Heart left ventricle (tissue), 16 donors: ENCODE measurements at regions of chr10 and their contacts with region 1.

Region 1: DNA sequence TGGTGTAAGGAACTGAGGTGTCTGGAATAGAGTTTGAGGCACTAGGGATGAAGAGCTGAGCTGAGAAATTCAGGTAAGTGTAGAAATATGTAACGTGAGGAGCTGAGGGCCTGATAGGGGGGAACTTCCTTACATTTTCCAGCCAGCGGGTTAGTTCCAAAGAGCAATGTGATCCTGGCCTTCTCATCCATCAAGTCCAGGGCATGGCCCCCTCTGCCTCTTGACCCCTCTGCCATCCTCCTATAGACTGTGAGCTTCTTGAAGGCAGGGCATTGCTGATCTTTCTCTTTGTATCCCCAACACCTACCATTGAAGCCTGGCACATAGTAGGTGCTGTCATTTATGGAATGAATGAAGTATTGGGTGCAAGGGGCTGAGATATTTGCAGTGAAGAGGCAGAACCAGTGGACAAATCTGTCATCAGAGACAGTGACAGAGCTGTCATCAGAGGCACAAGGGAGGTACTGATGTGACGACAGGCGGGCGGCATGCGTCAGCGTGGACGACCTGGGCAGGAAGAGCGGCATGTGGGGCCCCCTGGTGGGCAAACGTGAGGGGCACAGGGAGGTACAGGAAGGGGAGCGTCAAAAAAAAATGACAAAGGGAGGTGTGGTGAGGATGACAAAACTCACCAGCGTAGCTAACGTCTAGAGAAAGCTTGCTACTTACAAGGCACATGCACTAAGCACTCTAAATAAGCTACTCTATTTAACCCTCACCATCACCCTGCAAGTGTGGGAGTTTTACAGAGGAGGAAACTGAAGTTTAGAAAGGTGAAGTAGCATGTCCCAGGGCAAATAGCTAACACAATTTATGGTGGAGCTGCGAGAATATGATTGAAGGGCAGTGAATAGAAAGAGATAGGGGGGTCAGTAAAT is 5.2 kb upstream of the CAMK2G start:
- DNase-seq: peak; percentile 84 to 94 (median 89)
- ATAC-seq: peak; percentile 79 to 96 (median 92)
- H3K4me3 ChIP-seq: peak overlapping the region in 1 of 12 donors; percentile 1
- H3K27ac ChIP-seq: peak overlapping the region in 1 of 12 donors; percentile 6
- H3K4me1 ChIP-seq: peaks cover 0 to 21% (median 9%) of the 10 kb centered on the region in 12 donors
- H3K27me3 ChIP-seq: no peaks in the 10 kb centered on the region
- CTCF ChIP-seq: peak; percentile 88 to 98 (median 93)
- POLR2A ChIP-seq: no peak

Region 2: GRCh38 chr10:73088304-73088703 is 791.2 kb before region 1 on chr10:
- intact Hi-C with region 1: no loop called
- DNase-seq: no peak
- ATAC-seq: no peak
- H3K4me3 ChIP-seq: no peak overlapping the region
- H3K27ac ChIP-seq: peak overlapping the region in 7 of 12 donors; percentile 6 to 75 (median 23)
- H3K4me1 ChIP-seq: peaks cover 0 to 67% (median 24%) of the 10 kb centered on the region in 12 donors
- H3K27me3 ChIP-seq: no peaks in the 10 kb centered on the region
- CTCF ChIP-seq: no peak
- POLR2A ChIP-seq: no peak

Region 3: DNA sequence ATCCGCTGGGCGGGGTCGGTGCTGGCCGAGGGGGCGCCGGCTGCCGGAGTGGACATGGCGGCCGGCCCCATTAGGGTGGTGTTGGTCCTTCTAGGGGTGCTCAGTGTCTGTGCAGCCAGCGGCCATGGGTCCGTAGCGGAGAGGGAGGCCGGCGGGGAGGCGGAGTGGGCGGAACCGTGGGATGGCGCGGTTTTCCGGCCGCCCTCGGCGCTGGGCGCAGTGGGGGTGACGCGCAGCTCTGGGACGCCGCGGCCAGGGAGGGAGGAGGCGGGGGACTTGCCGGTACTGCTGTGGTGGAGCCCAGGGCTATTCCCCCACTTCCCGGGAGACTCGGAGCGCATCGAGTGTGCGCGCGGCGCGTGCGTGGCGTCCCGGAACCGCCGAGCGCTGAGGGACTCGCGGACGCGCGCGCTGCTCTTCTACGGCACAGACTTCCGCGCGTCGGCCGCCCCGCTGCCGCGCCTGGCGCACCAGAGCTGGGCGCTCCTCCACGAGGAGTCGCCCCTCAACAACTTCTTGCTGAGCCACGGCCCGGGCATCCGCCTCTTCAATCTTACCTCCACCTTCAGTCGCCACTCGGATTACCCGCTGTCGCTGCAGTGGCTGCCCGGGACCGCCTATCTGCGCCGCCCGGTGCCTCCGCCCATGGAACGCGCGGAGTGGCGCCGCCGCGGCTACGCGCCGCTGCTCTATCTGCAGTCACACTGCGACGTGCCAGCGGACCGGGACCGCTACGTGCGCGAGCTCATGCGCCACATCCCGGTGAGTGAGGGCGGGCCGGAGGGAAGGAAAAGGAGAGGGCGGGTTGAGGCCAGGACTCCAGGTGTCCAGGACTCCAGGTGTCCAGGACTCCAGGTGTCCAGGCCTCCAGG is 107.0 kb before region 1 on chr10:
- intact Hi-C with region 1: loop called in 1 of 10 experiments (anchors 5 kb)
- DNase-seq: peak; percentile 82 to 90 (median 87)
- ATAC-seq: peak; percentile 61 to 87 (median 85)
- H3K4me3 ChIP-seq: peak overlapping the region; percentile 46 to 95 (median 83)
- H3K27ac ChIP-seq: peak overlapping the region; percentile 93 to 100 (median 98)
- H3K4me1 ChIP-seq: peaks cover 7 to 52% (median 31%) of the 10 kb centered on the region in 12 donors
- H3K27me3 ChIP-seq: no peaks in the 10 kb centered on the region
- CTCF ChIP-seq: peak in 5 of 12 donors; percentile 16 to 43 (median 31)
- POLR2A ChIP-seq: peak; percentile 51 to 93

Region 4: GRCh38 chr10:73848821-73849489 is 30.6 kb before region 1 on chr10:
- intact Hi-C with region 1: loop called (anchors 1 to 2 kb)
- DNase-seq: peak; percentile 81 to 91 (median 84)
- ATAC-seq: peak; percentile 80 to 93 (median 92)
- H3K4me3 ChIP-seq: peak overlapping the region in 6 of 12 donors; percentile 8 to 29 (median 16)
- H3K27ac ChIP-seq: peak overlapping the region; percentile 7 to 88 (median 61)
- H3K4me1 ChIP-seq: peaks cover 0 to 29% (median 14%) of the 10 kb centered on the region in 12 donors
- H3K27me3 ChIP-seq: no peaks in the 10 kb centered on the region
- CTCF ChIP-seq: peak; percentile 99 to 100 (median 100)
- POLR2A ChIP-seq: no peak

Region 5: GRCh38 chr10:74234569-74234968 is 355.0 kb after region 1 on chr10:
- intact Hi-C with region 1: loop called in 3 of 10 experiments (anchors 10 kb)
- DNase-seq: no peak
- ATAC-seq: no peak
- H3K4me3 ChIP-seq: no peak overlapping the region
- H3K27ac ChIP-seq: no peak overlapping the region
- H3K4me1 ChIP-seq: peaks cover 0 to 9% (median 0%) of the 10 kb centered on the region in 12 donors
- H3K27me3 ChIP-seq: no peaks in the 10 kb centered on the region
- CTCF ChIP-seq: peak in 10 of 12 donors; percentile 12 to 56 (median 44)
- POLR2A ChIP-seq: no peak